ENCODE measurements at regions of chr6 and their contacts with region 1.

Region 1: DNA sequence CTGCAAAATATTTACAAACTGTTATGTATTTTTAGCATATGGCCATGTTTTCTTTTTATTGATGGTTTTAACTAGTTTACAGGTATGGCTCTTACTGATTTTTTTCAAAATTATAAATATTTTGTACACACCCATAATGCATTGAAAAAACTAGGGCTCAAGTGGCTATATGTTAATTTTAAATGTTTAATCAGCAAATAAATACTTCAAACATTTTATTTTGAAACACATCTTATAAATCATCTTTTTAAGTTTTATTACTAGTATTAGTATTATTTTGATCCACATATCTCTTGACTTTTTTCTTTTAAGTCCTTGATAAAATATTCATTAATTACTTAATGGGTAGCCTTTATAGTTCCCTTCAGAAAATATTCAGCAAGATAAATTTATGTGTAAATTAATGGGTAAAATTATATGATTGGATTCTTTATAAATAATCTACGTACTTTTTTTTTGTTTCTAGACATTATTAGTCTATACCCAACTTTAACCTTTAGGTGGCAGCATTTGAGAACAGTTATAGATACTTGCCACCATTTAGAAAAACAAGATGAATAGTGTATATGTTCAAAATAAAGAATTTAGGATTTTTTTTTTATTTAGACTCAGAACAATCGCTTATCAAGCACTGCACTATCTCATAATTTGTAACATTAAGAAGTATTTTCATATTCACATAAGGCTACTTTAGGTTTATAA is 241.9 kb downstream of the ADGRB3 start:
- DNase-seq: no peak
- ATAC-seq: no peak
- H3K4me3 ChIP-seq: no peak overlapping the region
- H3K4me3 Mint-ChIP-seq: no peak overlapping the region
- H3K27ac ChIP-seq: no peak overlapping the region
- H3K27ac Mint-ChIP-seq: no peak overlapping the region
- H3K4me1 ChIP-seq: no peaks in the 10 kb centered on the region
- H3K4me1 Mint-ChIP-seq: no peaks in the 10 kb centered on the region
- H3K27me3 ChIP-seq: no peaks in the 10 kb centered on the region
- H3K27me3 Mint-ChIP-seq: peaks cover 0 to 3% (median 0%) of the 10 kb centered on the region in 5 donors

Region 2: GRCh38 chr6:68852791-68853190 is 24.2 kb before region 1 on chr6:
- CTCF ChIA-PET with region 1: no interaction called
- POLR2A ChIA-PET with region 1: no interaction called
- intact Hi-C with region 1: no loop called
- DNase-seq: no peak
- ATAC-seq: no peak
- H3K4me3 ChIP-seq: no peak overlapping the region
- H3K4me3 Mint-ChIP-seq: no peak overlapping the region
- H3K27ac ChIP-seq: no peak overlapping the region
- H3K27ac Mint-ChIP-seq: no peak overlapping the region
- H3K4me1 ChIP-seq: no peaks in the 10 kb centered on the region
- H3K4me1 Mint-ChIP-seq: no peaks in the 10 kb centered on the region
- H3K27me3 ChIP-seq: no peaks in the 10 kb centered on the region
- H3K27me3 Mint-ChIP-seq: no peaks in the 10 kb centered on the region

Region 3: DNA sequence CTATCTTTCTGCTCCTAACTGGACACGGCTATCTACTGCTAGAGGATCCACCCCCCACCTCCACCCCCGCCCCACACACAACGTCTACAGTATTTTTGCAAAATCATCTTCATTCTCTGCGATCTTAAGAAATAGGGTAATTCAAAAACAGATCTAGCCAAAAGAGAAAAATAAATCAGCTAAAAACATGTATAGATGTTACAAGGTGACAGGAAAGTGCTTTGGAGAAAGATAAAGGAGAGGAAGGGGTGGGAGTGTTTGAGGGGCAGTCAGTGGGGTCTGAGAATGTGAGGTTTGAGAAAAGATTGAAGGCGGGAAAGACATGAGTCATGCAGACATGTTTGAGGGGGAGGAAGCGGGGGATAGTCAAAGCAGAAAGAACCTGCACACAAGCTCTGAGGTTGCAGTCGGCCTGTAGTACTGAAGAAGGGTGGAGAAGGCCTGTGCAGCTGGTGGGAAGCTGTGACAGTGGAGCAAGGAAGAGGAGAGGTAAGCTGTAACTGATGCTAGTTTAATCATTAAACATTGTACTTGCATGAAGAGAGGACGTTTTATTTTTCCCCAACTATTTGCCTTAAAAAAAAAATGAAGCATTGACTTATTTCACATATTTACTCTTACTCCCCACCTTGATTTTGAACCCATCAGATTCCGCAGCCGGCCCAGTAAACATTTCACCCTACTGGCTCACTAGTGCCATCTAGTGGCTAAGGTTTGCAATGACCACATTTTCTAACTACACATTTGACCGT is 90.8 kb after region 1 on chr6:
- CTCF ChIA-PET with region 1: no interaction called
- POLR2A ChIA-PET with region 1: no interaction called
- intact Hi-C with region 1: loop called in 1 of 2 experiments (anchors 5 kb)
- DNase-seq: peak; percentile 8 to 55 (median 32)
- ATAC-seq: peak; percentile 80
- H3K4me3 ChIP-seq: no peak overlapping the region
- H3K4me3 Mint-ChIP-seq: no peak overlapping the region
- H3K27ac ChIP-seq: no peak overlapping the region
- H3K27ac Mint-ChIP-seq: no peak overlapping the region
- H3K4me1 ChIP-seq: no peaks in the 10 kb centered on the region
- H3K4me1 Mint-ChIP-seq: peaks cover 0 to 4% (median 0%) of the 10 kb centered on the region in 7 donors
- H3K27me3 ChIP-seq: no peaks in the 10 kb centered on the region
- H3K27me3 Mint-ChIP-seq: peaks cover 0 to 9% (median 3%) of the 10 kb centered on the region in 5 donors

Region 4: GRCh38 chr6:69719602-69720193 is 842.8 kb after region 1 on chr6:
- CTCF ChIA-PET with region 1: no interaction called
- POLR2A ChIA-PET with region 1: no interaction called
- intact Hi-C with region 1: loop called in 1 of 2 experiments (anchors 10 kb)
- DNase-seq: no peak
- ATAC-seq: no peak
- H3K4me3 ChIP-seq: no peak overlapping the region
- H3K4me3 Mint-ChIP-seq: no peak overlapping the region
- H3K27ac ChIP-seq: no peak overlapping the region
- H3K27ac Mint-ChIP-seq: no peak overlapping the region
- H3K4me1 ChIP-seq: no peaks in the 10 kb centered on the region
- H3K4me1 Mint-ChIP-seq: peaks cover 0 to 27% (median 11%) of the 10 kb centered on the region in 7 donors
- H3K27me3 ChIP-seq: no peaks in the 10 kb centered on the region
- H3K27me3 Mint-ChIP-seq: no peaks in the 10 kb centered on the region

Region 5: GRCh38 chr6:70107852-70108629 is 1231.1 kb after region 1 on chr6:
- CTCF ChIA-PET with region 1: no interaction called
- POLR2A ChIA-PET with region 1: no interaction called
- intact Hi-C with region 1: loop called in 1 of 2 experiments (anchors 2 kb)
- DNase-seq: peak in 6 of 9 donors; percentile 4 to 43 (median 17)
- ATAC-seq: no peak
- H3K4me3 ChIP-seq: no peak overlapping the region
- H3K4me3 Mint-ChIP-seq: no peak overlapping the region
- H3K27ac ChIP-seq: no peak overlapping the region
- H3K27ac Mint-ChIP-seq: no peak overlapping the region
- H3K4me1 ChIP-seq: no peaks in the 10 kb centered on the region
- H3K4me1 Mint-ChIP-seq: no peaks in the 10 kb centered on the region
- H3K27me3 ChIP-seq: no peaks in the 10 kb centered on the region
- H3K27me3 Mint-ChIP-seq: peaks cover 0 to 21% (median 14%) of the 10 kb centered on the region in 5 donors